ENCODE measurements at regions of chr2 and their contacts with region 1.

Region 1: GRCh38 chr2:5932556-5933469 is 240.6 kb downstream of the SOX11 start:
- DNase-seq: peak; percentile 23 to 90 (median 86)
- H3K4me3 ChIP-seq: peak overlapping the region; percentile 31 to 86 (median 68)
- H3K27ac ChIP-seq: peak overlapping the region; percentile 50 to 99 (median 95)
- H3K27me3 ChIP-seq: peaks cover 0 to 8% (median 0%) of the 10 kb centered on the region in 45 donors
- CTCF ChIP-seq: peak in 30 of 56 donors; percentile 8 to 46 (median 26)

Region 2: GRCh38 chr2:5587766-5588165 is 345.0 kb before region 1 on chr2:
- intact Hi-C with region 1: no loop called
- DNase-seq: no peak
- H3K4me3 ChIP-seq: no peak overlapping the region
- H3K27ac ChIP-seq: no peak overlapping the region
- H3K27me3 ChIP-seq: peaks cover 0 to 50% (median 10%) of the 10 kb centered on the region in 45 donors
- CTCF ChIP-seq: peak in 1 of 56 donors; percentile 9

Region 3: DNA sequence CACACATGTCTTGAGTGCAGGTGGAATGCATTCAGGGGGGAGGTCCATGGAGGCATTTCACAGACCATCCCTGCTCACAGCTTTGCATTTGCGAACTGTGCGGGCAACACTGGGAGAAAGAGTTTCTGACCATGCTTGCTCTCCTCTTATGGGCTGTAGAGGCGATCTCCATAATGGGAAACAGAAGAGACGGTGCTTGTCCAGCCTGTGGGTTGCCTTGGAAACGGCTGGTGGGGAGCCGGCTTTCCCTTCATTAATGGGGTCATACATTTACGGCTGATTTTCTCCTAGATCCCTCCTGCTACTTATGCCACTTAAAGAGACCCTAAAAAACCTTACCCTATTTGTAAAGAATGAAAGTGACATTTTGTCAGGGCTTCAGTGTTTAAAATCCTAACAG is 93.3 kb before region 1 on chr2:
- intact Hi-C with region 1: no loop called
- DNase-seq: peak in 1 of 10 donors; percentile 9
- H3K4me3 ChIP-seq: peak overlapping the region in 46 of 59 donors; percentile 4 to 58 (median 34)
- H3K27ac ChIP-seq: no peak overlapping the region
- H3K27me3 ChIP-seq: peaks cover 0 to 11% (median 0%) of the 10 kb centered on the region in 45 donors
- CTCF ChIP-seq: no peak

Region 4: DNA sequence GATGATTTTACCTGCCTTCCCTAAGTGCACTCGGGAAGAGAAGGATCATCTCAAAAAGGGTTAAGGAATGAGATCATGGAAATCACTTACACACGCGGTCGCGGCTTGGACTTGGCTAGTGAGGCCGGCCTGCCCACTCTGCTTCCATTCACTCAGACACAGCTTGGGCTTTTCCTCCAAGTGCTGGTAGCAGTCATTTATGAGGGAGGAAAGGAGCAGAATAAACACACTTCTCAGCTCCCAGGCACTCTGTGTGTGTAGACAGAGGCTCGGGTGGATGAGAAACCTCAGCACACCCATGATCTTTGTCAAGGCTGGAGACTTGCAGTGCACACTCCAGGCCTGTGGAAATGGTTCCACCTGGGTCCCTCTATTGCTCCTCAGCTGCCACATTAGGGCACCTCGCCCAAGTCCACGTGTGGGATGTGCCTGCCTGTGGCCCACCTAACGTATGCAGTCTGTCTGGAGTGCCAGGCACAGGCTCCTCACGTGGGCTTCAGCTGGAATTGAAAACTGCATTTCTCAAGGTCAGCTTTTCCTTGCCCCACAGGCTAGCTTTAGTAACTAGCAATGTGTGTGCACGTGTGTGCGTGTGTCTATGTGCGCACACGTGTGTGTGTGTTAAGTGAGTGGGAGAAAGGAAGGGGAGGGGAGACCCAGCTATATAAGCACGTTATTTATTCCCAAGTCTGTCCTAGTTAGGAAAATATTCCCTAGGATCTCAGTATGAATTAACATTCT is 47.8 kb after region 1 on chr2:
- intact Hi-C with region 1: loop called (anchors 5 kb)
- DNase-seq: no peak
- H3K4me3 ChIP-seq: peak overlapping the region in 7 of 59 donors; percentile 28 to 69 (median 65)
- H3K27ac ChIP-seq: peak overlapping the region in 55 of 59 donors; percentile 1 to 92 (median 79)
- H3K27me3 ChIP-seq: peaks cover 0 to 17% (median 0%) of the 10 kb centered on the region in 45 donors
- CTCF ChIP-seq: no peak

Region 5: GRCh38 chr2:6080932-6081753 is 148.3 kb after region 1 on chr2:
- intact Hi-C with region 1: loop called in 1 of 2 experiments (anchors 2 kb)
- DNase-seq: peak in 6 of 10 donors; percentile 10 to 60 (median 49)
- H3K4me3 ChIP-seq: peak overlapping the region in 57 of 59 donors; percentile 10 to 64 (median 42)
- H3K27ac ChIP-seq: peak overlapping the region; percentile 41 to 96 (median 87)
- H3K27me3 ChIP-seq: peaks cover 0 to 8% (median 0%) of the 10 kb centered on the region in 45 donors
- CTCF ChIP-seq: peak in 5 of 56 donors; percentile 7 to 24 (median 10)

Region 6: DNA sequence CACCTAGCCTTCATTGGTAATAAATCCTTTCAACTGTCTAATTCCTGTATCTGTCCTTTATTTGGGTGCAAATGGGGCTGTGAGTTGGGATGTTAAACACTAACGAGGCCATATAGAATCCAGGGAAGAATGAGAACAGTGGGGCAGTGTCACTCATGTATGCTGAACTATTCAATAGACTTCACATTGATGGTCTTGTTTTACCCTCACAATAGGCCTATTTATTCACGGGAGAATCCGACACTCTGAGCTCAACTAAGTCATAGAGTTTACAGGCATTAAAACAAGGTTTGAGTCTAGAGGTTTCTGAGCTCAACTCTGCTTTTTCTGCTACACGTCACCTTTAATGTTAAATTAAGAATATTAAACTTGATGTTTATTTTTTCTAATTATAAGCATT is 181.0 kb after region 1 on chr2:
- intact Hi-C with region 1: loop called in 1 of 2 experiments (anchors 10 kb)
- DNase-seq: no peak
- H3K4me3 ChIP-seq: peak overlapping the region in 1 of 59 donors; percentile 17
- H3K27ac ChIP-seq: peak overlapping the region in 3 of 59 donors; percentile 12 to 32 (median 14)
- H3K27me3 ChIP-seq: peaks cover 0 to 8% (median 0%) of the 10 kb centered on the region in 45 donors
- CTCF ChIP-seq: peak in 3 of 56 donors; percentile 18 to 29 (median 28)

Measured in dorsolateral prefrontal cortex (tissue), 120 donors.